Activated naive CD8-positive, alpha-beta T cell treated with anti-CD3 and anti-CD28 coated beads, Interleukin-2, amount 10 ng/mL, durations not matched to agents 7 days and 5 days (primary cell): ENCODE measurements at regions of chr2 and their contacts with region 1.

Region 1: DNA sequence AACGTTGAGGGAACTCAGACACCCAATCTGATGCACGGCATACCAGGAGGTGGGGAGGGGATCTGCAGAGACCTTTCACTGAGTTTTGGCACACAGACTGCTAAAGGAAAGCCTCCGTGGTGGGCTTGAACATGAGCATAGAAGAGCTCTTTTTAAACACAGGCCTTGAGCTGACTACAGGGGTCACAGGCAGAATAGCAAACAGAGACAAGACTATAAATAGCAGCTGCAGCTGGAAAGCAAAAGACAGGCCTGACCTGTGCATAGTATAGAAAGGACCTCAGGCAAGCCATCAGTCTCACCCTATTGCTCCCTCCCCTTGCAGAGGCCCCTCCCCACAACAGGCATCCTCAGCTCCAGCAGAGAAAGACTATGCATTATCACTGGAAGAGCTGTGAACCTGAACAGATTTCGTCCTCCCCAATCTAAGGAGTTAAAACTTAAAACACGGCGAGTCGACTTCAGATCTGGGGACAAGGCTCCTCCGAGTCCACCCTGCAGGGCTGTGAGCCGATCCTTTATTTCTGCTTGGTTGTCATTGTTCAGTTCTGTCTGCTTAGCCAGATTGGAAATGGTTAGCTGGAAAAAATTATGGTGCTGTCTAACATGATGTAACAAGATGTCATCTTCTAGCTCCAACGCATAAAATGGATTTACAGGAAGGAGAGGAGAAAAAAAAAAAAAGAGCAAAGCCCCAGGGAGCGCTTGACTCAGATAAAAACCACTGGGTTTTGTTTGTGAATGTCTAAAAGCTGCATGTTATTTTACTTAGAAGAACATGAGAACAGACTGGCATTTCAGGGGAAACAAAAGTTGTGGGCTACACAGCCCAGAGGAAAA is 25.2 kb upstream of the LCLAT1 start:
- DNase-seq: peak; percentile 39
- ATAC-seq: peak; percentile 38
- H3K4me3 Mint-ChIP-seq: peak overlapping the region; percentile 68
- H3K27ac Mint-ChIP-seq: peak overlapping the region; percentile 86
- H3K4me1 Mint-ChIP-seq: peaks cover 32% of the 10 kb centered on the region
- H3K27me3 Mint-ChIP-seq: no peaks in the 10 kb centered on the region

Region 2: DNA sequence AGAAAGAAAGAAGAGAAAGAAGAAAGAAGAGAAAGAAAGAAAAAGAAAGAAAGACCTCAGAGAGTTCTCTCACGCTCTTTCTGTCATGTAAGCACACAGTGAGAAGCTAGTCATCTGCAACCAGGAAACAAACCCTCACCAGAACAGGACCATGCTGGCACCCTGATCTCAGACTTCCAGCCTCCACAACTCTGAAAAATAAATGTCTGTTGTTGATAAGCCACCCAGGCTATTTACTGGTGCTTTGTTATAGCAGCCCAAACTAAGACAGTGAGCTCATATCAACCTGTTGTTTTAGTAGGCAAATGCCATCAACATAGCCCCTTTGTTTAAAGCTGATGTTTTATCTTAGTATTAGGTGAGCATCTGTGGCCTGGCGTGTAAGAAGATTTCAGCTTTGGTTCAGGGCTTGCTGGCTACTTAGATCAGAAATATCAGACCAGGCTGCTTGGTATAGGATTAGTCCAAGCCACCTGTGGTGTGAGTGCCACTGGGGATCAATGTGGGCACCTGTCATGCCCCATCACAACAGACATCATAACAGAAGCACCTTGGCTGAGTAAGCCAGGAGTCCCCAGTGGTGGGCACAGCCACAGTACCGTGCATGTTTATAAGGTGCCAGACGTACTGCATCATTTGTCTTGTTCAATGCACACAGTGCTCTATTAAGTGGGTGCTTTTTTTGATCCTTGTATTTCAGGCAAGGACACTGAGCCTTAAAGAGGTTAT is 96.1 kb before region 1 on chr2:
- POLR2A ChIA-PET with region 1: no interaction called
- DNase-seq: no peak
- ATAC-seq: peak; percentile 56
- H3K4me3 Mint-ChIP-seq: peak overlapping the region; percentile 27
- H3K27ac Mint-ChIP-seq: peak overlapping the region; percentile 61
- H3K4me1 Mint-ChIP-seq: peaks cover 27% of the 10 kb centered on the region
- H3K27me3 Mint-ChIP-seq: no peaks in the 10 kb centered on the region

Region 3: DNA sequence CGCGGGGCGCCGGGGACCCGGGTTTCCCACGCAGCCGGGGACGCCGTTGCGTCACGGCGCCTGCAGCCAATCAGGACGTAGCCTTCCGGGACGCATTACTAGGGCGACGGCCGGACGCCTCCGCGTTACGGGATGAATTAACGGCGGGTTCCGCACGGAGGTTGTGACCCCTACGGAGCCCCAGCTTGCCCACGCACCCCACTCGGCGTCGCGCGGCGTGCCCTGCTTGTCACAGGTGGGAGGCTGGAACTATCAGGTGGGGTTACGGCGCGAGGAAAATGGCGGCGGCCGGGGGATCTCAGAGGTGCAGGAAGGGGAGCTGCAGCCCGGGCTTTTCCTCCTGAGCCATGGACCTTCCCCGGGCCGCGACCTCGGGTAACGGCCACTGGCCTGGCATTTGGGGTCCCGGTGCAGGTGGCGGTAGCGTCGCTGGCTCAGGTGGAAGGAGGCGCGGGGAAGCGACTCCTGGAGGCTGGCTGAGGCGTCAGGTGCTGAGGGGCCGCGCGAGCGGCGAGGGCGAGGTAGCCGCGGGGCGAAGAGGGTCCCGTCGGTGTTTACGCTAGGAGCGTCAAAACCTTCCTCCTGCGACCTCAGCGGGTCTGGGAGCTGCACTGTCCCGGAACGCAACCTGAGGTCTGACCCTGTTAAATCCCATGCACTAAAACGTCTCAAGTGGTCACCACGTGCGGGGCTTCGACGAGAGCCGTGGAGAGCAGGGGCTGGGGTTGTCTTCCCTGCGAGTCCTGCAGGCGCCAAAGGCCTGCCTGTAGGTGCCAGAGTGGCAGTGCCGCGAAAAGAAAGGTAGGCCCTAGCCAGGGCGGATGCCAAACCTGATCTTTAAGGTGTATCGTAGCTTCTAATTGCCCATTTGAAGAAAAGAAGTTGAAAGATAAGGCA is 25.6 kb after region 1 on chr2 and contains the start of gene LCLAT1:
- POLR2A ChIA-PET with region 1: interaction called, 11 read pairs
- DNase-seq: peak; percentile 90
- ATAC-seq: peak; percentile 90
- H3K4me3 Mint-ChIP-seq: peak within 1 kb of the TSS; percentile 92
- H3K27ac Mint-ChIP-seq: peak within 1 kb of the TSS; percentile 92
- H3K4me1 Mint-ChIP-seq: peaks cover 18% of the 10 kb centered on the region
- H3K27me3 Mint-ChIP-seq: no peaks in the 10 kb centered on the region
- total RNA-seq, gene LCLAT1: 19.8 to 21.2 TPM